ENCODE measurements at regions of chr2 and their contacts with region 1.

Region 1: GRCh38 chr2:143110758-143111428 is 18.3 kb upstream of the ARHGAP15 start:
- DNase-seq: peak; percentile 62
- ATAC-seq: peak; percentile 98
- H3K4me3 ChIP-seq: no peak overlapping the region
- H3K27ac ChIP-seq: no peak overlapping the region
- H3K4me1 ChIP-seq: no peaks in the 10 kb centered on the region
- H3K27me3 ChIP-seq: no peaks in the 10 kb centered on the region
- CTCF ChIP-seq: peak; percentile 55 to 79 (median 67)
- EP300 ChIP-seq: no peak
- POLR2A ChIP-seq: no peak
- RAD21 ChIP-seq: peak; percentile 97

Region 2: DNA sequence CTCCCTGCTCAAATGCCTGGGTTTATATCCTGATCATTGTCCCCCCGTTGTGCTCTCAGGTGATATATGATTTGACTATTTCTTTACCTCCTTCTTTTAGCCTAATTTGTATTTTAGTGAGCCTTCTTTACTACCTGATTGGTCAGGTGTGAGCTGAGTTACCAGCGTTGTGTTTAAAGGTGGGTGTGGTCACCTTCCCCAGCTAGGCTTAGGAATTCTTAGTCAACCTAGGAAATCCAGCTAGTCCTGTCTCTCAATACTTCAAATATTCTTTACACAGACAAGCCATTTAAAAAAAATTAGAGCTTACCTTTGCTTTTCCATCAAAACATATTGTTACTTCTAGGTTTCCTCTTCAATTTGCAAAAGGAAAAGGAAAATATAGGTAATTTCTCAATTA is 203.2 kb before region 1 on chr2:
- CTCF ChIA-PET with region 1: no interaction called
- POLR2A ChIA-PET with region 1: no interaction called
- RAD21 ChIA-PET with region 1: no interaction called
- SMC1A ChIA-PET with region 1: no interaction called
- in situ Hi-C with region 1: no loop called
- intact Hi-C with region 1: no loop called
- DNase-seq: no peak
- ATAC-seq: no peak
- H3K4me3 ChIP-seq: no peak overlapping the region
- H3K27ac ChIP-seq: no peak overlapping the region
- H3K4me1 ChIP-seq: no peaks in the 10 kb centered on the region
- H3K27me3 ChIP-seq: no peaks in the 10 kb centered on the region
- CTCF ChIP-seq: no peak
- EP300 ChIP-seq: no peak
- POLR2A ChIP-seq: no peak
- RAD21 ChIP-seq: no peak

Region 3: DNA sequence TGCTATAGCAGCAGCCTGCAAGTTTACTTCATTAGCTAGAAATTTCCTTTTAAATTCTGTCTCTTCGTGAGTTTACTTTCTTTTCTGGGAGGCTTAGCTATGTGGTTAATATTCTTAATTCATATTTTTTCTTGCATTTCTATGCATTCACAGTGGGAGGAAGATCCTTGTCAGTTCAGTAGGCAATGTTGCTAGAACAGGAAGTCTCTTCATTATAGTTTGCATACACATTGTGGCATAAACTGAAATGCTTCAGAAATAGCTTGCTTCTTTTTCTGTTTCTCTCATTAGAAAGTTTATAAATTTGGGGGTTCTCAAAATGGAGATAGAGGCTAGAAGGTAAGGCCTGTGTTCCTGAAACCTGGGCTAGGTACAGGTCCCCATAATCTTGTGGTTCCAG is 10.2 kb after region 1 on chr2:
- CTCF ChIA-PET with region 1: interaction called, 54 read pairs
- POLR2A ChIA-PET with region 1: no interaction called
- RAD21 ChIA-PET with region 1: interaction called, 12 read pairs
- SMC1A ChIA-PET with region 1: interaction called, 14 read pairs
- in situ Hi-C with region 1: no loop called
- intact Hi-C with region 1: no loop called
- DNase-seq: no peak
- ATAC-seq: peak; percentile 62
- H3K4me3 ChIP-seq: no peak overlapping the region
- H3K27ac ChIP-seq: peak overlapping the region; percentile 30
- H3K4me1 ChIP-seq: peaks cover 7% of the 10 kb centered on the region
- H3K27me3 ChIP-seq: no peaks in the 10 kb centered on the region
- CTCF ChIP-seq: no peak
- EP300 ChIP-seq: no peak
- POLR2A ChIP-seq: no peak
- RAD21 ChIP-seq: no peak

Region 4: GRCh38 chr2:143162123-143162837 is 51.4 kb after region 1 on chr2:
- CTCF ChIA-PET with region 1: interaction called, 71 read pairs
- POLR2A ChIA-PET with region 1: no interaction called
- RAD21 ChIA-PET with region 1: interaction called, 43 read pairs
- SMC1A ChIA-PET with region 1: interaction called, 92 read pairs
- in situ Hi-C with region 1: no loop called
- intact Hi-C with region 1: loop called (anchors 5 kb)
- DNase-seq: no peak
- ATAC-seq: peak; percentile 96
- H3K4me3 ChIP-seq: no peak overlapping the region
- H3K27ac ChIP-seq: no peak overlapping the region
- H3K4me1 ChIP-seq: peaks cover 6% of the 10 kb centered on the region
- H3K27me3 ChIP-seq: no peaks in the 10 kb centered on the region
- CTCF ChIP-seq: peak; percentile 70 to 77 (median 73); a peak in 5 of 6 replicates
- EP300 ChIP-seq: no peak
- POLR2A ChIP-seq: no peak
- RAD21 ChIP-seq: peak; percentile 96

Region 5: GRCh38 chr2:143193121-143193520 is 82.2 kb after region 1 on chr2:
- CTCF ChIA-PET with region 1: interaction called, 13 read pairs
- POLR2A ChIA-PET with region 1: no interaction called
- RAD21 ChIA-PET with region 1: interaction called, 5 read pairs
- SMC1A ChIA-PET with region 1: interaction called, 14 read pairs
- in situ Hi-C with region 1: no loop called
- intact Hi-C with region 1: no loop called
- DNase-seq: no peak
- ATAC-seq: no peak
- H3K4me3 ChIP-seq: no peak overlapping the region
- H3K27ac ChIP-seq: no peak overlapping the region
- H3K4me1 ChIP-seq: no peaks in the 10 kb centered on the region
- H3K27me3 ChIP-seq: no peaks in the 10 kb centered on the region
- CTCF ChIP-seq: no peak
- EP300 ChIP-seq: no peak
- POLR2A ChIP-seq: no peak
- RAD21 ChIP-seq: no peak

Region 6: DNA sequence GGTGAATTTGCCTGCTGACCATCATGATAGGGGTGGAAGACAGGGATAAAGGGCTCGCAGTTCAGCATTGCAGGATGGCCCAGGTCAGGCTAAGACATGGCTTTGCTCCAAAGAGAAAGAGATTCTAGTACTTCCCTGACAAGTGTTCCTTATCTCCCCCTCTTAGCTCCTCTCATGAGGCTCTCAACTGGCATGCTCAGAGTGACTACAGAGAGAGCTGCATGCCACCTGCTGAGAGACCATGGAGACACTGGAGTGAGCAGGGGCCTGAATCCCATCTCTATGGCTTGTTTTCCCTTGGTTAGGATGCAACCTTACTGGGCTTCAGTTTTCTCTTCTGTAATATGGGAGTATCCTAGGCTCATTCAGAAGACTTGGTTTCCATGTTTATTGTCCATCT is 112.7 kb after region 1 on chr2:
- CTCF ChIA-PET with region 1: interaction called, 228 read pairs
- POLR2A ChIA-PET with region 1: interaction called, 3 read pairs
- RAD21 ChIA-PET with region 1: interaction called, 87 read pairs
- SMC1A ChIA-PET with region 1: interaction called, 194 read pairs
- in situ Hi-C with region 1: no loop called
- intact Hi-C with region 1: loop called (anchors 1 kb)
- DNase-seq: no peak
- ATAC-seq: no peak
- H3K4me3 ChIP-seq: no peak overlapping the region
- H3K27ac ChIP-seq: no peak overlapping the region
- H3K4me1 ChIP-seq: no peaks in the 10 kb centered on the region
- H3K27me3 ChIP-seq: no peaks in the 10 kb centered on the region
- CTCF ChIP-seq: no peak
- EP300 ChIP-seq: no peak
- POLR2A ChIP-seq: no peak
- RAD21 ChIP-seq: no peak

Region 7: GRCh38 chr2:143259368-143259958 is 148.6 kb after region 1 on chr2:
- CTCF ChIA-PET with region 1: interaction called, 187 read pairs
- POLR2A ChIA-PET with region 1: no interaction called
- RAD21 ChIA-PET with region 1: interaction called, 115 read pairs
- SMC1A ChIA-PET with region 1: interaction called, 164 read pairs
- in situ Hi-C with region 1: loop called (anchors 5 kb)
- intact Hi-C with region 1: loop called (anchors 1 kb)
- DNase-seq: peak; percentile 36
- ATAC-seq: peak; percentile 83
- H3K4me3 ChIP-seq: no peak overlapping the region
- H3K27ac ChIP-seq: no peak overlapping the region
- H3K4me1 ChIP-seq: peaks cover 17% of the 10 kb centered on the region; the same call in 1 of the 2 replicates
- H3K27me3 ChIP-seq: no peaks in the 10 kb centered on the region
- CTCF ChIP-seq: peak; percentile 68 to 73 (median 71)
- EP300 ChIP-seq: no peak
- POLR2A ChIP-seq: no peak
- RAD21 ChIP-seq: peak; percentile 87